Testis (tissue), 5 donors: ENCODE measurements at regions of chr3 and their contacts with region 1.

Region 1: DNA sequence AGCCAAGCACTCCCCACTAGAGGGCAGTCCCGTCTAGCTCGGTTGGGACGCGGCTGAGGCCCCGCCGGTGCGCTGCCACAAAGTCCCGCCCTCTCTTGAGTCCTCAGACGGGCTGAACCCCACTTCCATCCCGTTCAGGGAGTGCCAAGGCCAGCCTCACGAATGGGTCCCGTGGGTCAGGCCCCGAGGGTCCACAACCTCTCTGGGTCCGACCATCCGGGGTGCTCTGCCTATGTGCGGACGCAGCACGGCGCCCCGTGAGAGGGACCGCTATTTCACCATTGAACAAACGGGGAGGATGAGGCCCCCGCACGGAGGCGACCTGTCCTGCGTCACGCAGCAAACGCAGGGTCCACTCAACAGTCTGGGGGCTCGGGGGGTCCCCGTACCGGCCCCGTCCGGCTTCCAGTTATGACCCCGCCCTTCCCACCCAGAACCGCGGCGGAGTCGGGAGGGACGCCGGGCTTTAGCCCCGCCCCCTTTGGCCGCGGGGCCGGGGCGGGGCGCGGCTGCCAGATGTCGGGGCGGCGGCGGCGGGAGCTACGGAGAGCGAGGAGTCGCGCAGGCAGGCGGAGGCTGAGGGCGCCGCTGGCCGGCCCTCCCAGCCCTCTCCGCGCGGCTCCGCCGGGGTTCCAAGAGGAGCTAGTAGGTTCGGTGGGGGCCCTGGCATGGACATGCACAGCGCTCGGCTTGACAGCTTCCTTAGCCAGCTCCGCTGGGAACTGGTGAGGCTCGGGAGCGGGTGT is at the start of gene INKA1:
- DNase-seq: peak; percentile 93
- H3K4me3 ChIP-seq: peak within 1 kb of the TSS; percentile 90 to 92
- H3K27ac ChIP-seq: peak within 1 kb of the TSS; percentile 80 to 83
- H3K4me1 ChIP-seq: peaks cover 33% of the 10 kb centered on the region
- H3K27me3 ChIP-seq: no peaks in the 10 kb centered on the region
- CTCF ChIP-seq: peak in 2 of 3 experiments; percentile 65 to 91
- POLR2A ChIP-seq: no peak
- total RNA-seq, gene INKA1: 5.1 to 6.3 TPM

Region 2: DNA sequence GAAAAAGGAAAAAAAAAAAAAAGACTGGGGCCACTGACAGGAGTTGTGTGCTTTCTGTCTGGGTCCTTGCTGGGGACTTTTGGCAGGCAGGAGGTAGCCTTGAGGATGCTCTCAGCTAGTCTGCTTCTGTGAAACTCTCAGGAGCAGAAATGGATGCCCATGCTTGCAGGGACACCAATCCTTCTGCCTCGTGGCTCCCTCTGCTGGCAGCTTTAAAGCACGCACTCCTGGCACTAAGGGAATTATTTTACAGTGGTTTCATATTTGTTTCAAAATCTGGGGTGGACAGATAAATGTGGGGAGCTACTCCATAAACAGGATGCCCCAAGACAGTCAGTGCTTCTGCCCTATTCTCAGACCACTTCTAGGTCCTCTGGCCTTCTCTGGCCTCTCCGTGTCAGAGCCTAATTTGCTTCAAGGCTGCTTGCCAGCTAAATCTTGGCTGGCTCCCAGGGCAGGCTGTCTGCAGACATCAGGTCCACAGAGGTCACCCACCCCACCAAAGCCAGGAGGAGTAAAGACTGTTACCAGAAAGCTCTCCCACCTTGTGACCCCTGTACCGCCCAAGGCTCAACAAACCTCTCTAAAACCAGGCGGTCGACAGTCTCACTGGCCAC is 36.4 kb after region 1 on chr3:
- intact Hi-C with region 1: loop called (anchors 5 kb)
- DNase-seq: peak; percentile 85
- H3K4me3 ChIP-seq: no peak overlapping the region
- H3K27ac ChIP-seq: peak overlapping the region in 1 of 2 donors; percentile 56
- H3K4me1 ChIP-seq: peaks cover 3% of the 10 kb centered on the region
- H3K27me3 ChIP-seq: no peaks in the 10 kb centered on the region
- CTCF ChIP-seq: peak; percentile 87 to 93 (median 91)
- POLR2A ChIP-seq: no peak

Region 3: DNA sequence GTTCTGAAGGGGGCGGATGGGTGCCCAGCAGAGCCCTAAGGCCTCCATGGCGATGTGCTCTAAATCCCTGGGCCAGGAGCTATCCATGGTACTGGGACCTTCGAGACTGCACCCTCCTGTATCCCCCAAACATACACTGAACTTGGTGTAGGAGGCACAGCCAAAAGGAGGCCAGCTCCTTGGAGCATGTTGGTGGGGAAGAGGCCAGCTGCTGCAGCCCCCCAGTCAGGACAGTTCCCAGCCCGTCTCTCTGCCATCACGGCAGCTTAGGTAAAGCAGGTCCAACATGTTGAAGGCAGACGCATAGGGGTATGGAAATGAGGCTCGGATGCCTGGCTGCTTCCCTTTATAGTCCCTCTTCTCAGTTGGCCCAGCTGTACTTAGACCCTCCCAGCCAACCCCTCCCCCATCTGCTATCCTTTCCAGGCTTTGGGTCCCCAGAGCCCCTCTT is 65.0 kb after region 1 on chr3:
- intact Hi-C with region 1: no loop called
- DNase-seq: peak; percentile 23
- H3K4me3 ChIP-seq: no peak overlapping the region
- H3K27ac ChIP-seq: no peak overlapping the region
- H3K4me1 ChIP-seq: peaks cover 11% of the 10 kb centered on the region
- H3K27me3 ChIP-seq: no peaks in the 10 kb centered on the region
- CTCF ChIP-seq: no peak
- POLR2A ChIP-seq: no peak